ENCODE measurements at regions of chr17 and their contacts with region 1.

Region 1: DNA sequence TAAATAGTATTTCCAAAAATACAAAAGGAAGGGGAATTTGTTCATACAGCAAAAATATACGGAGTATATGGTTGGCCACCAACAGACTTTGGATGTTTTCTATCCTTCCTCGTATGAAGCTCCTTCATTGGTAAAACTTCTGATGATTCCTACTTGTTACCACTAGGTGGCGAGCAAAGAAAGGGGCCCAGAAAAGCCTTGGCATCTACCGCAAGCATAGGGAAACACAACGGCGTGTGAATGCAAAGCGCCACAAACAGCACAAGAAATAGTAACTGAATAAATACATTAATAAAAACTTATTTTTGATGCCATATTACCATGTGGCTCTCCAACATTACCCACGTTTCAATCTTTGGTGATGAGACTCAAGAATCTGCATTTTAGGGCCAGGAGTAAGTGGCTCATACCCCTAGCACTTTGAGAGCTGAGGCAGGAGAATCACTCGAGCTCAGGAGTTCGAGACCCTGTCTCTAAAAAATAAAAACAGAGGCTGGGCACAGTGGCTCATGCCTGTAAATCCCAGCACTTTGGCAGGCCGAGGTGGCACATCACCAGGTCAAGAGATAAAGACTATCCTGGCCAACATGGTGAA is 34.5 kb downstream of the YWHAE start:
- DNase-seq: peak; percentile 74 to 80 (median 78)
- H3K4me3 ChIP-seq: no peak overlapping the region
- H3K4me3 Mint-ChIP-seq: peak overlapping the region in 3 of 8 donors; percentile 21 to 31 (median 26)
- H3K27ac ChIP-seq: peak overlapping the region; percentile 23
- H3K27ac Mint-ChIP-seq: peak overlapping the region; percentile 57 to 89 (median 76)
- H3K4me1 ChIP-seq: peaks cover 77% of the 10 kb centered on the region
- H3K4me1 Mint-ChIP-seq: peaks cover 40 to 79% (median 53%) of the 10 kb centered on the region in 4 donors
- H3K27me3 ChIP-seq: no peaks in the 10 kb centered on the region
- H3K27me3 Mint-ChIP-seq: no peaks in the 10 kb centered on the region

Region 2: GRCh38 chr17:1299524-1300370 is 65.8 kb before region 1 on chr17:
- CTCF ChIA-PET with region 1: no interaction called
- POLR2A ChIA-PET with region 1: no interaction called
- intact Hi-C with region 1: no loop called
- DNase-seq: no peak
- H3K4me3 ChIP-seq: no peak overlapping the region
- H3K4me3 Mint-ChIP-seq: peak overlapping the region in 1 of 8 donors; percentile 25
- H3K27ac ChIP-seq: no peak overlapping the region
- H3K27ac Mint-ChIP-seq: peak overlapping the region in 1 of 7 donors; percentile 19
- H3K4me1 ChIP-seq: peaks cover 46% of the 10 kb centered on the region
- H3K4me1 Mint-ChIP-seq: peaks cover 7 to 49% (median 22%) of the 10 kb centered on the region in 4 donors
- H3K27me3 ChIP-seq: no peaks in the 10 kb centered on the region
- H3K27me3 Mint-ChIP-seq: peaks cover 0 to 2% of the 10 kb centered on the region in 2 donors

Region 3: DNA sequence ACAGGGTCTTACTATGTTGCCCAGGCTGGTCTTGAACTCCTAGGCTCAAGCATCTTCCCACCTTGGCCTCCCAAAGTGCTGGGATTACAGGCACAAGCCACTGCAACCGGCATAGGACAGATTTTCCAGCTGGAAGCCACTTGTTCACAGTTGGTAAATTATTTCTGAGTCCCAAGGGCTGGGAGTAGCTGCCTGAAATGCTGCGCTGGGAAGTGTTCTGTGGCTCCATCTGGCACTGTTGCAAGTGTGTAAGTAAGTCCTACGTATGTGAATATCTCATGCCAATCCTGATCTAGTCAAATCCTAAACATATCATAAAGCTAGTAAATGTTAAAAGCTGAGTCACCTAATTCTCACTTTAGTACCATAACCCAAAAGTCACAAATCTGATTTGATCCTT is 13.6 kb before region 1 on chr17:
- CTCF ChIA-PET with region 1: interaction called, 12 read pairs
- POLR2A ChIA-PET with region 1: interaction called, 4 read pairs
- intact Hi-C with region 1: no loop called
- DNase-seq: no peak
- H3K4me3 ChIP-seq: no peak overlapping the region
- H3K4me3 Mint-ChIP-seq: no peak overlapping the region
- H3K27ac ChIP-seq: no peak overlapping the region
- H3K27ac Mint-ChIP-seq: peak overlapping the region in 3 of 7 donors; percentile 4 to 42 (median 32)
- H3K4me1 ChIP-seq: peaks cover 11% of the 10 kb centered on the region
- H3K4me1 Mint-ChIP-seq: peaks cover 16 to 26% (median 17%) of the 10 kb centered on the region in 4 donors
- H3K27me3 ChIP-seq: no peaks in the 10 kb centered on the region
- H3K27me3 Mint-ChIP-seq: no peaks in the 10 kb centered on the region

Region 4: GRCh38 chr17:1390433-1391367 is 25.2 kb after region 1 on chr17:
- CTCF ChIA-PET with region 1: interaction called, 24 read pairs
- POLR2A ChIA-PET with region 1: interaction called, 3 read pairs
- intact Hi-C with region 1: no loop called
- DNase-seq: no peak
- H3K4me3 ChIP-seq: no peak overlapping the region
- H3K4me3 Mint-ChIP-seq: peak overlapping the region in 7 of 8 donors; percentile 7 to 66 (median 41)
- H3K27ac ChIP-seq: peak overlapping the region; percentile 11
- H3K27ac Mint-ChIP-seq: peak overlapping the region; percentile 5 to 82 (median 60)
- H3K4me1 ChIP-seq: peaks cover 94% of the 10 kb centered on the region
- H3K4me1 Mint-ChIP-seq: peaks cover 42 to 91% (median 63%) of the 10 kb centered on the region in 4 donors
- H3K27me3 ChIP-seq: no peaks in the 10 kb centered on the region
- H3K27me3 Mint-ChIP-seq: no peaks in the 10 kb centered on the region

Region 5: GRCh38 chr17:1455797-1456599 is 90.5 kb after region 1 on chr17 and contains the start of gene CRK:
- CTCF ChIA-PET with region 1: interaction called, 4 read pairs
- POLR2A ChIA-PET with region 1: interaction called, 4 read pairs
- intact Hi-C with region 1: loop called (anchors 1 kb)
- DNase-seq: peak; percentile 96 to 99 (median 98)
- H3K4me3 ChIP-seq: peak within 1 kb of the TSS; percentile 81 to 92
- H3K4me3 Mint-ChIP-seq: peak within 1 kb of the TSS; percentile 88 to 96 (median 93)
- H3K27ac ChIP-seq: peak within 1 kb of the TSS; percentile 94
- H3K27ac Mint-ChIP-seq: peak within 1 kb of the TSS; percentile 80 to 96 (median 95)
- H3K4me1 ChIP-seq: peaks cover 43% of the 10 kb centered on the region
- H3K4me1 Mint-ChIP-seq: peaks cover 28 to 61% (median 45%) of the 10 kb centered on the region in 4 donors
- H3K27me3 ChIP-seq: no peaks in the 10 kb centered on the region
- H3K27me3 Mint-ChIP-seq: peaks cover 0 to 2% of the 10 kb centered on the region in 2 donors
- total RNA-seq, gene CRK: 29.3 to 32.1 TPM

Region 6: GRCh38 chr17:1628856-1629646 is 263.5 kb after region 1 on chr17:
- CTCF ChIA-PET with region 1: interaction called, 21 read pairs
- POLR2A ChIA-PET with region 1: interaction called, 3 read pairs
- intact Hi-C with region 1: loop called (anchors 1 kb)
- DNase-seq: peak; percentile 83 to 90 (median 85)
- H3K4me3 ChIP-seq: peak overlapping the region; percentile 57 to 73
- H3K4me3 Mint-ChIP-seq: peak overlapping the region; percentile 87 to 99 (median 92)
- H3K27ac ChIP-seq: peak overlapping the region; percentile 44
- H3K27ac Mint-ChIP-seq: peak overlapping the region; percentile 75 to 96 (median 86)
- H3K4me1 ChIP-seq: peaks cover 22% of the 10 kb centered on the region
- H3K4me1 Mint-ChIP-seq: peaks cover 3 to 27% (median 12%) of the 10 kb centered on the region in 4 donors
- H3K27me3 ChIP-seq: peaks cover 8% of the 10 kb centered on the region
- H3K27me3 Mint-ChIP-seq: peaks cover 1% of the 10 kb centered on the region in 2 donors

Measured in CD4-positive, alpha-beta memory T cell (primary cell).